Activated T-helper 1 cell treated with anti-CD3 and anti-CD28 coated beads, Interleukin-12 subunit alpha, Interleukin-12 subunit beta, Interleukin-2, Interleukin-4 antibody, amounts not matched to agents 30 ng/mL and 10 ng/mL and 1 ng/mL, durations not matched to agents 14 hours and 24 hours and 36 hours (primary cell): ENCODE measurements at regions of chr19 and their contacts with region 1.

Region 1: GRCh38 chr19:38975214-38975860 is at the start of gene FBXO17:
- DNase-seq: no peak
- H3K4me3 Mint-ChIP-seq: peak within 1 kb of the TSS; percentile 69
- H3K27ac Mint-ChIP-seq: no peak within 1 kb of the TSS
- H3K4me1 Mint-ChIP-seq: peaks cover 23% of the 10 kb centered on the region
- H3K27me3 Mint-ChIP-seq: peaks cover 29% of the 10 kb centered on the region
- total RNA-seq, gene FBXO17: 0.10 TPM in 1 of 2 replicates, not detected in the other

Region 2: GRCh38 chr19:39335168-39335548 is 359.8 kb after region 1 on chr19:
- intact Hi-C with region 1: loop called (anchors 10 kb)
- DNase-seq: no peak
- H3K4me3 Mint-ChIP-seq: peak overlapping the region; percentile 96
- H3K27ac Mint-ChIP-seq: peak overlapping the region; percentile 96
- H3K4me1 Mint-ChIP-seq: peaks cover 62% of the 10 kb centered on the region
- H3K27me3 Mint-ChIP-seq: no peaks in the 10 kb centered on the region